ENCODE measurements at regions of chr20 and their contacts with region 1.

Region 1: GRCh38 chr20:41061155-41061554 is 32.5 kb downstream of the TOP1 start:
- DNase-seq: no peak
- ATAC-seq: no peak
- H3K4me3 ChIP-seq: no peak overlapping the region
- H3K4me3 Mint-ChIP-seq: no peak overlapping the region
- H3K27ac ChIP-seq: no peak overlapping the region
- H3K27ac Mint-ChIP-seq: peak overlapping the region in 1 of 2 donors; percentile 2
- H3K4me1 ChIP-seq: no peaks in the 10 kb centered on the region
- H3K4me1 Mint-ChIP-seq: peaks cover 57 to 66% (median 63%) of the 10 kb centered on the region in 3 donors
- H3K27me3 ChIP-seq: no peaks in the 10 kb centered on the region
- H3K27me3 Mint-ChIP-seq: no peaks in the 10 kb centered on the region

Region 2: GRCh38 chr20:41030531-41031244 is 30.5 kb before region 1 on chr20:
- CTCF ChIA-PET with region 1: no interaction called
- POLR2A ChIA-PET with region 1: interaction called, 3 to 11 read pairs
- DNase-seq: no peak
- ATAC-seq: no peak
- H3K4me3 ChIP-seq: peak overlapping the region; percentile 13 to 84
- H3K4me3 Mint-ChIP-seq: peak overlapping the region; percentile 92 to 95 (median 95)
- H3K27ac ChIP-seq: no peak overlapping the region
- H3K27ac Mint-ChIP-seq: no peak overlapping the region
- H3K4me1 ChIP-seq: peaks cover 39 to 40% of the 10 kb centered on the region in 2 experiments
- H3K4me1 Mint-ChIP-seq: peaks cover 66 to 75% (median 72%) of the 10 kb centered on the region in 3 donors
- H3K27me3 ChIP-seq: no peaks in the 10 kb centered on the region
- H3K27me3 Mint-ChIP-seq: no peaks in the 10 kb centered on the region

Region 3: DNA sequence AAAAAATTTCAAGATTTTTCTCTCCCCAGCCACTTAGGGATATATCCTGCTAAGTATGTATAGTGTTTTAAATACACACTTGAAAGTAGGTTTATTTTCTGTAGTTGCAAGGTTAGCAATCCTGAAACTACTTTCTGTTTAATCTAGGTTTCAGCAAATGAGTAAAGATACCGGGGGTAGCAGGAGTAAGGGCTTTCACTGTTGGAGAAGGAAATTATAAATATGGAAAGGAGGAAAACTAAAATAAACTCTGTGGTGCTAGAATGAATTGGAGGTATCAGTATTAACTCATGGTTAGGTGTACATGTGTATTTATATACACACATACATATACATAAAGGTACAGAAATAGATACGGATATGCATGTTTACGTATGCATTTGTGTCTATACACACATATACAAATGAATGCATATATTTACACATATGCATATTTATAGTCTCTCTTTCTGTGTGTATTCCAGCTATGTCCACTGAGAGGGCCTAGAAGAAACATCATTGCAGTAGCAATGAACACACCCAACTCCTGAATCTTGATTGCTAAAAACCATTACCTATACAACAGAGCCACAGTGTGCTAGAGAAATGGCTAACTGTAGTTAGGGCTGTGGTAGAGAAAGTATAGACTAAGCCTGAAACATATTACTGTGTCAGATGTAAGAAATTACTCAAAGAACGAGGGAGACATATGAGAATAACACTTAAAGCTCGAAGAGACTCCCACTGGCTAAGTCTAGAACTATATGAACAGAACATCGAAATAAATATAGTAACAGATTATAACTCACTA is 401.4 kb after region 1 on chr20:
- CTCF ChIA-PET with region 1: no interaction called
- POLR2A ChIA-PET with region 1: no interaction called
- DNase-seq: no peak
- ATAC-seq: no peak
- H3K4me3 ChIP-seq: no peak overlapping the region
- H3K4me3 Mint-ChIP-seq: no peak overlapping the region
- H3K27ac ChIP-seq: no peak overlapping the region
- H3K27ac Mint-ChIP-seq: no peak overlapping the region
- H3K4me1 ChIP-seq: no peaks in the 10 kb centered on the region
- H3K4me1 Mint-ChIP-seq: no peaks in the 10 kb centered on the region
- H3K27me3 ChIP-seq: no peaks in the 10 kb centered on the region
- H3K27me3 Mint-ChIP-seq: no peaks in the 10 kb centered on the region

Measured in T-cell (primary cell).